ENCODE measurements at regions of chr20 and their contacts with region 1.

Region 1: DNA sequence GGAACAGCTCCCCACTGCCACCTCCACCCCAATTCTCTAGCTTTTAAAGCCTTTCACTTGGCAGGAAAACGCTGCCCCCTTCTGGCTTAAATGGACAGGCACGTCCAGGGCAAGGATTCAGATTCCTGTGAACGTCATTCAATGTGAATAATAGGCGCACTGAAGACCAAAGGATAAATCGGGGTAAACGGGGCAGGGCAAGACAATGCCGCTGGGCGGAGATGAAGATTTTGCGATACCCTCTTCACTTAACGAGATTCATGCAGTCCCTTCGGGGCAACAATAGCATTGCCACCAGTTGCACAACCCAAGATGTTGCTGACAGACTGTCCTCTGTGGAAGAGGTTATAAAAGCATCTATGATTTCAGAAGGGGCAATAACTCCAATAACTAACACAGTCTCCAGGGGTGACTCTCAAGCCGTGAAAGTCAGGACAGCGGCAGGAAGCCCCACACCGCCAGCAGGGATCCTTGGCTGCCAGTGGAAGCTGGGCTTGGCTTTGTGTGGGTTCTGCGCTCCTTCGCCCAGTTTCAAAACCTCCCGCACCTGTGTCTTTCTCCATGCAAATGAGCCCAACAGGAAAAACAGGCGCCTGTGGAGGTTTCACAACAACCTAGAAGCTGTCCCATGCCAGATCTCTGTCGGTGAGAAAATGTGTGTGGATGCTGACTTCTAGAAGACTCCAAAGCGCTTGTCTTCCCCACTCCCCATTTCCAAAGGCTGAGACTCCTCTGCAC is 291.8 kb downstream of the BMP7 start:
- DNase-seq: peak; percentile 76 to 81
- H3K4me3 ChIP-seq: no peak overlapping the region
- H3K4me3 Mint-ChIP-seq: no peak overlapping the region
- H3K27ac Mint-ChIP-seq: no peak overlapping the region
- H3K4me1 ChIP-seq: no peaks in the 10 kb centered on the region
- H3K4me1 Mint-ChIP-seq: no peaks in the 10 kb centered on the region
- H3K27me3 ChIP-seq: peaks cover 1% of the 10 kb centered on the region; the same call in 1 of the 2 replicates
- H3K27me3 Mint-ChIP-seq: peaks cover 21% of the 10 kb centered on the region
- CTCF ChIP-seq: peak; percentile 95 to 96

Region 2: GRCh38 chr20:56872752-56873458 is 101.8 kb before region 1 on chr20:
- CTCF ChIA-PET with region 1: interaction called, 3 read pairs
- POLR2A ChIA-PET with region 1: no interaction called
- intact Hi-C with region 1: loop called (anchors 5 kb)
- DNase-seq: no peak
- H3K4me3 ChIP-seq: no peak overlapping the region
- H3K4me3 Mint-ChIP-seq: no peak overlapping the region
- H3K27ac Mint-ChIP-seq: no peak overlapping the region
- H3K4me1 ChIP-seq: 0 out of 2 replicates have a peak, but pooled peaks cover 4% of the 10 kb centered on the region
- H3K4me1 Mint-ChIP-seq: no peaks in the 10 kb centered on the region
- H3K27me3 ChIP-seq: no peaks in the 10 kb centered on the region; the same call in none of the 2 replicates
- H3K27me3 Mint-ChIP-seq: peaks cover 12% of the 10 kb centered on the region
- CTCF ChIP-seq: no peak